AG04450 (cell line): ENCODE measurements at regions of chr3 and their contacts with region 1.

Region 1: DNA sequence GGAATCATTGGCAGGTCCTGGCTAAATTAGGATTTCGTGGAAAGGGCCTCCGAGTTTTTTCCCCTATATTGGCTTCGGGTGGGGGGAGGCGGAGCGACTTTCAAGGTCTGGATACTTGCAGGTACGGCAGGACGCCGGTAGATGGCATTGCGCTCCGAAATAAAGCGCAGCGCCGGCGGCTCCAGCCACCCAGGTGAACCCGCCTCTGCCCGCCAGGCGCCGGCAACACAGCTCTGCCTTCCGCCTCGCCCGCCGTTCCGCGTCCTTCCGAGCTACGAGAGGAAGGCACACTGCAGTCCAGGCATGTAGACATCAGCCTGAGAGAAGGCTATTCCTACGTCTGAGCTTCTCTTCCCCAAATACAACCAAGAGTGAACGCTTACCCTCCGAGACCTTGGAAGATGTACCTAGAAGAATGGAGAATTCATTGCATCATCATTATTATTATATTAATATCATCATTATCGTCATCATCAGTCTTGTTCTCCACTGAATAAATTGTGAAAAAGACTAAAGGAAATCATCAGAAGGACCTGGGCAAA is 514.1 kb downstream of the MECOM start:
- DNase-seq: peak; percentile 62
- H3K4me3 ChIP-seq: peak overlapping the region; percentile 63
- H3K27ac ChIP-seq: peak overlapping the region; percentile 49
- H3K27me3 ChIP-seq: no peaks in the 10 kb centered on the region
- CTCF ChIP-seq: peak; percentile 85

Region 2: GRCh38 chr3:168952551-168952950 is 196.9 kb before region 1 on chr3:
- CTCF ChIA-PET with region 1: interaction called, 22 read pairs
- POLR2A ChIA-PET with region 1: no interaction called
- DNase-seq: no peak
- H3K4me3 ChIP-seq: peak overlapping the region; percentile 1; the same call in 1 of the 2 replicates
- H3K27ac ChIP-seq: no peak overlapping the region
- H3K27me3 ChIP-seq: no peaks in the 10 kb centered on the region
- CTCF ChIP-seq: peak; percentile 35

Region 3: DNA sequence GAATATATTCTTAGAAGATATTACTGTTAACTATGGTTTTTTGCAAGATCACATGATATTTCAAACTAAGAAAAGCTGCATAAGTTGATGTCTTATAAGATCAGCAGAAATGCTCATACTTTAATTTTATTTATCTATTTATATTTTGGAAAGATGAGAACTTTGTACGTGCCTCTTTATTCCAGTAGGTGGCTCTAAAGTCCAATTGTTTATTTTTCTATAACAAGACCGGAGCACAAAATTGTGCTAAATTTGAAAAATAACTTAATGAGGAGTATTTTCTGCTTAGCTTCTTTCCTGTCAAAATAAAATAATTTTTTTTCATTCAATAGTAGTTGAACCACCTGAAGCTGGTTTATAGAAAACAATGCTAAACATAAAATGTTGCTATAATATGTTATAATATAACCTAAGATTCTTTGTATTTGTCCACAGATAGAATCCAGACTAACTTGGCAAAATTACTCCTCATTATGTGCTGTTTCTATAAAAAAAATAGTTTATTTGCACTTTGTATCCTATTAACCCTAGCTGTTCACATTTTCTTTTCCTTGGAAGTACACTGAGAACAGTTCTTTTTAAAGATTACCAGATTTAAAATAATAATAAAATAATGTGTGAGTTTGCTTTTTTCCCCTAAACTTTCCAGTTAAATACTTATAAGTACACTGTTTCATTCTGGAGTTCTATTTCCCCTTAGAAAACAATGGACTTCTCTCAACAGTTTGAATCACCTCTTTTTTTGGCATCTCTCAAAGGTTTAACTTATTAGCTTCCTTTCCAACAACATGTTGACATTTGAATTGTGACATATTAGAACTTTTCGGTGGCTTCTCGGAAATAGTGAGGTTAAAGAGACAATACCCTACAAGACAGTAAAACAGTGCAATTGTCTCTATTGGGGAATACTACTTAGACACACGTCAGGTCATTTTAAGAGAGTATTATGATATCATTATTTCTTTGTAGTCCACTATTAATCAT is 15.9 kb before region 1 on chr3:
- CTCF ChIA-PET with region 1: interaction called, 26 read pairs
- POLR2A ChIA-PET with region 1: interaction called, 3 read pairs
- DNase-seq: no peak
- H3K4me3 ChIP-seq: no peak overlapping the region
- H3K27ac ChIP-seq: no peak overlapping the region
- H3K27me3 ChIP-seq: no peaks in the 10 kb centered on the region
- CTCF ChIP-seq: peak; percentile 54

Region 4: DNA sequence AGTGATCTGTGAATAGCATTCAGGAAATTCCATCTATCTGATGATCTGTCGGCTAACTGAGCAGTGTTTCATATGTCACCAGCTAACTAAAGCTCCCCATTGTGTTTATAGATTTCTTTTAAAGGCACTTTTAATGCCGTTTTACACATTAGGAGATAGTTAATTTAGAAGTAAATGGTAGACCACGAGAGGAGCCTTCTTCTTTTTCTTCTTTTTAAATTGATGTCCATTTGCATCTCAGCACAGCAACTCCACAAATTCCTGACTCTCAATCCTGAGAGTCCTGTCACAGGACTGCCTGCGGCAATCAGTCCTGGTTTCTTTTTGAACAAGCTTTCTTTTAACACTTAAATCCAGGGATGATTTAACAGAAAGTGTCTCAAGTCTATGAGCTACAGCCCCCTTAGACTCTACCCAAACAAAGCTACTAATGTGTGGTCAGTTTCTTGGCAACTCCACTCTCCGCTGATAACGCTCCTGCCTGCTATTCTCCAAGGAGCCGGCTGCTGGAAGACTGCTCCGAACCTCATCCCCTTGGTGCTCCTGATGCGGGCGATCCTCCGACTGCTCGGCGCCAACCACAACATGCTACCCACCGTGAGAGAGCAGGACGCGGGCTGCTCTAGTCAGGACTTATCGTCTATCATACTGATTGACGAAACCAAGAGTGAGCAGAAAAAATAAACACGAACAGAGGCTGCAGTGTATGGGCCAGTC is 92.7 kb after region 1 on chr3:
- CTCF ChIA-PET with region 1: interaction called, 13 read pairs
- POLR2A ChIA-PET with region 1: no interaction called
- DNase-seq: no peak
- H3K4me3 ChIP-seq: peak overlapping the region; percentile 53
- H3K27ac ChIP-seq: peak overlapping the region; percentile 75
- H3K27me3 ChIP-seq: no peaks in the 10 kb centered on the region
- CTCF ChIP-seq: no peak

Region 5: DNA sequence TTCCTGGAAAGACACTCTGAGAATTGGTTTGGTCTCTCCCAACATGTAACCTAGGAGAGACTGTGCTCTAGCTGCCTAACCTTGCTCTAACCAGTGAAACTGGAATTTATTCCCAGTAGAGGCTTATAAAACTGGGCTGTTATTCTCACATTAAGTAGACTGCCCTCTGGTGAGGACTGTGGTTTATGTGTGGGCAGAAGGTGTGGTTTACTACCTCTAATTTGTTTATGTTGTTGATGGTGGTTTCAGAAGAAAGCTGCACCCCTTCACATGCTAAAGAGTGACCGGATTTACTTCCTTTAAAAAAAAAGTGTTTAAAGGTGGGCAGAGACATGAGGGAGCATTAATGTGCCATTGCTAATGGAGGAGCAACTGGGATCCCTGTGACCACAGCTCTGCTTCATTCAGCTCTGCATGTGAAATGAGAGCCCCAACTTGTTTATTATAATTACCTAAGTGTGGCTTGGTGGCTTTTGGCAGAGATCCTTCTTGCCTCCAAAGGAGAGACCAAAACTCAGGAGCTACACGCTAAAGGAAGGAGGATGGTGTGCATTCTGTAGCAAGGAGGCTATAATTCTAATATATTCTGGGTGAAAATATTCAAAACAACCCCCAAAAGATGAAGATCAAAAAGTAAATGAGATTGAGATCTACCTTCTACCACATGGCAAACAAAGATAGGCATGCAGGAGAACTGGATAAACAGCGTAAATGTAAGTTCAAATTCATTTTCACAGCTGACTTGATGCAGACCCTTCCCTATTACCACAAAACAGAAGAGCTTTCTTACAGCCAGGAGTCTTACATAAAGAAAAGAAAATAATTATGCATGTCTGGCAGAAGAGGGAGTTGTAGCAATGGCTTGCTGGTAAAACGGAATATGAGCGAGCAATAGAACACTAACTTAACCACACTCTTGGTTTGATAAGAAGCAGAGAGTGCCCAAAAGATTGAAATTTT is 241.1 kb after region 1 on chr3:
- CTCF ChIA-PET with region 1: interaction called, 12 read pairs
- POLR2A ChIA-PET with region 1: no interaction called
- DNase-seq: no peak
- H3K4me3 ChIP-seq: no peak overlapping the region
- H3K27ac ChIP-seq: no peak overlapping the region
- H3K27me3 ChIP-seq: no peaks in the 10 kb centered on the region
- CTCF ChIP-seq: peak; percentile 19; the same call in 1 of the 2 replicates

Region 6: DNA sequence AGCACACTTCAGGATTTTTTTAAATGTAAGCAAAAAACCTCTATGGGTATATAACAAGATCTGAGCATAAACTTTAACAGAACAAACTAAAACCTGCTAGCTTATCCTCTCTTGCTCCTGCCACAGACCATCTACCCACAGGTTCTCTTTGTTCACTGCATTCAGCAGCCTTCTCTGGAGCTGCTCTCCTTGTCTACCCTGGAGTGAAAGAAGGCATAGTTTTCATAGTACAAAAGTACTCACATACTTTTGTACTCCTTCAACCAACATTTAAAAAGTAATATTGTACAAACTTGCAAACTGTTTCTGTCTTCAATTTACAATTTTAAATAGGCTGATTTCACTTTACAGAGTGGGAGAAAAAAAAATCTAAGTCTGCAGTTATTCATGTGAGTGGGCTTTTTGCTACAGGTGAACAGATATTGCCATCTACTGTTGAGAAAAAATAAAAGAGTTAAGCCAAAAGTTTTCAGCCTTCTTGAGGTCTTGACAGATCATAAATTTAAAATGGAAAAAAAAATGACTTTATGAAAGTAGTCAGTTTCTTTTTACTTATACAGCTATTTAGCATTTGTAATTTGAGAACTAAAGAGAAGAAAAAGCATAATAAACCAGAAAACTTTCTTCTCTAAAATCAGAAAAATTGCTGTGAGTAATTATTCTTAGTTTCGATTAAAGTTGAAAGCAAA is 595.1 kb after region 1 on chr3:
- CTCF ChIA-PET with region 1: interaction called, 10 read pairs
- POLR2A ChIA-PET with region 1: no interaction called
- DNase-seq: no peak
- H3K4me3 ChIP-seq: no peak overlapping the region
- H3K27ac ChIP-seq: no peak overlapping the region
- H3K27me3 ChIP-seq: peaks cover 6% of the 10 kb centered on the region
- CTCF ChIP-seq: peak; percentile 47